Tibial artery (tissue), 4 donors: ENCODE measurements at regions of chr10 and their contacts with region 1.

Region 1: DNA sequence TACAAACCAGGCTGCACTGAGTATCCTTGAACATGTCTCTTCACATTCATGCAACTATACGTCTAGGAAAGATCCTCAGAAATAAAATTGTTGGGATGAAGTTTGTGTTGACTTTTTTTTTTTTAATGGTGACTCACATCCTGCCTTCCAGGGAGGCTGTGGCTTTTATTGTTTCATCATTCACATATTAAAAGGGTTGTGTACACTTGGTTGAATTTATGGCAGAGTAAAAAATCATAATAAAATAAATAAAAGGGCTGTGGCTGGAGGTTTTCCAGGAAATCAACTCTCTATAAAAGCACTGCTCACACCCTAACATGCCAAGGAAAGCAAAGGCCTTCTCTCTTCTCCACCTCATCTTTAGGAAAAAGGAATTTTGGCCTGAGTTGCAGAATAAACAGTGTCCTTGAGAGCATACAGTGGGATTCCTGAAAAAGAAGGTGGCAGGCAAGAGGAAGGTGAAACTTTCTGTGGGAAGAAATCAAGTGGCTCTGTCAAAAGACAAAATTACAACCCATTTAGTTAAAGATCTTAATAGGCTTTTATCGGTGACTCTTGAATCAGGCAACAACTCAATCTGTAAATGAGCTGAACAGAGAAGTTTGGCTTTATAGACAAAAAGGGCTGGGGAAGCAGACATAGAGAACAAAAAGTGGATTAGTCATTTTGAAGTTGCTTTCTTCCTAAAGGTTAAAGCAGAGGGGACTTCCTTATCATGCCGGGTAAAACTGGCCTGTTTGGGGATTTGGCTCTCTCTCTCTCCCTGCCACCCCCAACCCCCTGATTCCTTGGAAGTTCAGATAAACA is 41.6 kb upstream of the FHIP2A start:
- DNase-seq: no peak
- H3K4me3 ChIP-seq: no peak overlapping the region
- H3K27ac ChIP-seq: no peak overlapping the region
- H3K4me1 ChIP-seq: peaks cover 0 to 6% (median 3%) of the 10 kb centered on the region in 4 donors
- H3K27me3 ChIP-seq: no peaks in the 10 kb centered on the region
- CTCF ChIP-seq: no peak

Region 2: GRCh38 chr10:114470956-114471905 is 308.8 kb before region 1 on chr10:
- intact Hi-C with region 1: loop called (anchors 10 kb)
- DNase-seq: no peak
- H3K4me3 ChIP-seq: no peak overlapping the region
- H3K27ac ChIP-seq: no peak overlapping the region
- H3K4me1 ChIP-seq: no peaks in the 10 kb centered on the region
- H3K27me3 ChIP-seq: no peaks in the 10 kb centered on the region
- CTCF ChIP-seq: peak; percentile 72 to 78

Region 3: GRCh38 chr10:114550756-114551635 is 229.0 kb before region 1 on chr10:
- intact Hi-C with region 1: loop called (anchors 5 kb)
- DNase-seq: peak in 1 of 2 donors; percentile 62
- H3K4me3 ChIP-seq: no peak overlapping the region
- H3K27ac ChIP-seq: peak overlapping the region in 1 of 2 donors; percentile 7
- H3K4me1 ChIP-seq: peaks cover 0 to 17% (median 12%) of the 10 kb centered on the region in 4 donors
- H3K27me3 ChIP-seq: no peaks in the 10 kb centered on the region
- CTCF ChIP-seq: peak; percentile 43 to 77